Heart right ventricle (tissue), 16 donors: ENCODE measurements at regions of chr16 and their contacts with region 1.

Region 1: GRCh38 chr16:66451548-66451947 is 24.5 kb downstream of the BEAN1 start:
- DNase-seq: no peak
- ATAC-seq: no peak
- H3K4me3 ChIP-seq: no peak overlapping the region
- H3K27ac ChIP-seq: no peak overlapping the region
- H3K4me1 ChIP-seq: no peaks in the 10 kb centered on the region
- H3K27me3 ChIP-seq: no peaks in the 10 kb centered on the region
- CTCF ChIP-seq: no peak

Region 2: DNA sequence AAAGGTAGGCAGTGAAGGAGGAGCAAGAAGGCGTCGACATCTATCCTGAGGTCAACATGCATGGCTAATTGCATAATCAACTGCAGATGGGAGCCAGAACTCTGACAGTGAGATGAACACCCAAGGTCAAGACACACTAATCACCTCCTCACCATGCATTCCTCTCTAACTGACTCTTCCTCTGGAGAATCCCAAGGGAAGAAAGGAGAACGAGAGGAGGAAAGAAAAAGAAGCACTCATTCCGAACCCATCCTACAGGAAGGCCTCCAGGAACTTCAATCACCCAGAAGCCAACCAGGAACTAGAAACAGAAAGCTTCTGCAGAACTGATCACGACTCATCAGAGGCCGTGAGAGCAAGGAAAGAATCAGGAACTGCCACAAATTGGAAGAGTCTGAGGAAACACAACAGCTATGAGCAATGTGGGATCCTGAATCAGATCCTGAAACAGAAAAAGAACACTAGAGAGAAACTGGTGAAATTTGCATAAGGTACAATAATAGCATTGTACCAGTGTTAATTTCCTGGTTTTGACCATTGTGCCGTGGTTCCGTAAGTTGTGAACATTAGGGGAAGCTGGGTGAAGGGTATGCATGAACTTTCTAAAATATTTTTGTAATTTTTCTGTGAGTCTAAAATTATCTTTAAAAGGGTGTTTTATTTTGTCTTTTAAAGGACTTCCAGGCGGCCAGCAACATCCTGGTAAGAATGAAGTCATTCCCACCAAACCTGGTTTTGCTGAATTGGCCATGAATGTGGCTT is 34.4 kb before region 1 on chr16:
- intact Hi-C with region 1: no loop called
- DNase-seq: no peak
- ATAC-seq: no peak
- H3K4me3 ChIP-seq: no peak overlapping the region
- H3K27ac ChIP-seq: no peak overlapping the region
- H3K4me1 ChIP-seq: peaks cover 0 to 11% (median 0%) of the 10 kb centered on the region in 9 donors
- H3K27me3 ChIP-seq: peaks cover 0 to 8% (median 0%) of the 10 kb centered on the region in 7 donors
- CTCF ChIP-seq: no peak

Region 3: DNA sequence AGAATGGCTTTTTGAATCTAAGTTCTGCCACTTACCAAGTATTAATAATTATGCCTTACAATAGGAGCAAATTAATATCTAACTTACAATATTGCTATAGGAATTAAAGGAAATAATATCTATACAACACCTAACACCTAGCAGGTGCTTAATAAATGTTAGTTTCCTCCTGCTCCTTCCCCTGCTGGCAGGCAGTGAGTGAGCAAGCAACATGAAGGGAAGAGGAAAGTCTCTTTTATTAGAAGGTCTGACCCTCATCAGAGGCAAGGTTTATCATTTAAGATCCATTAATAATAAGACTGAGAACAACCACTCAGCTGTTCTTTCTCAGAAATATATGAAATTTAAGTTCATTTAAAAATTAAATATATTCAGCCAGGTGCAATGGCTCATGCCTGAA is 306.5 kb after region 1 on chr16:
- intact Hi-C with region 1: loop called in 1 of 10 experiments (anchors 5 kb)
- DNase-seq: no peak
- ATAC-seq: no peak
- H3K4me3 ChIP-seq: no peak overlapping the region
- H3K27ac ChIP-seq: no peak overlapping the region
- H3K4me1 ChIP-seq: no peaks in the 10 kb centered on the region
- H3K27me3 ChIP-seq: peaks cover 0 to 11% (median 0%) of the 10 kb centered on the region in 7 donors
- CTCF ChIP-seq: no peak